Right ventricle myocardium superior (tissue), 1 donor: ENCODE measurements at regions of chr7 and their contacts with region 1.

Region 1: GRCh38 chr7:130069978-130070860 is at the start of gene KLHDC10:
- DNase-seq: peak; percentile 98
- ATAC-seq: peak; percentile 98
- total RNA-seq, gene KLHDC10: 24.1 TPM

Region 2: GRCh38 chr7:130758429-130759056 is 688.3 kb after region 1 on chr7:
- intact Hi-C with region 1: loop called (anchors 10 kb)
- DNase-seq: no peak
- ATAC-seq: no peak

Region 3: DNA sequence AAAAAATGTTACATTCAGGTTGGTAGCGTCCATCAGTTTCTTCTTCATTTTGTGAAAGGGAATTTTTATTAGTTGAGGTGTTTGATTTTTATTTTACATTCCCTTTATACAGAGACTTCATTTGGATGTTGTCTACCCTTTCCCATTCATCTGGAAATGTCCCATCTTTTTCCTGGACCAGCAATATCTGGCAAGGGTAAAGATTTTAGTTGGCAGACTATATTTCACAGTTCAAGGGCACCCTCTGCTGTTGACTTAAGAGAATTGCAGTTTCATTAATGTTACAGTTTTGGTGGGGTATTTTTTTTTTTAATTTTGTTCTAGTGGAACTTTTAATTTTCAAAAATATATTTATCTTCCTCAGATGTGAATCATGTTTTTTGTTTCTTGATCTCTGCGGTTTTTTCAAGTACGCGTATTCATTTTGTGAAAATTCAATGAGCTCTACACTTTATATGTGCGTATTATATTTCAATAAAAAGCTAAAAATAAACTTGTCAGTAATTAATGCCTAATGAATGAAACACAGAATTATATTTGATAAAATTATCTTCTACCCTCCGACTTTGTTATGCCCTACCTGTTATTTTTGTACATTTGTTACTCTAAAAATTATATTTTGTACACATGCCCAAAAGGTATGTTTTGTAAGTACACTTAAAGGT is 761.7 kb after region 1 on chr7:
- intact Hi-C with region 1: loop called (anchors 5 kb)
- DNase-seq: no peak
- ATAC-seq: no peak